ENCODE measurements at regions of chr16 and their contacts with region 1.

Region 1: GRCh38 chr16:31507929-31508705 is at the start of gene RUSF1:
- DNase-seq: peak; percentile 89
- H3K4me3 Mint-ChIP-seq: peak within 1 kb of the TSS; percentile 91
- H3K27ac Mint-ChIP-seq: peak within 1 kb of the TSS; percentile 91
- H3K4me1 Mint-ChIP-seq: peaks cover 45% of the 10 kb centered on the region
- H3K27me3 Mint-ChIP-seq: no peaks in the 10 kb centered on the region
- total RNA-seq, gene RUSF1: 36.8 to 37.9 TPM

Region 2: GRCh38 chr16:31441956-31442355 is 66.2 kb before region 1 on chr16:
- CTCF ChIA-PET with region 1: no interaction called
- POLR2A ChIA-PET with region 1: no interaction called
- DNase-seq: no peak
- H3K4me3 Mint-ChIP-seq: peak overlapping the region; percentile 73
- H3K27ac Mint-ChIP-seq: no peak overlapping the region
- H3K4me1 Mint-ChIP-seq: peaks cover 29% of the 10 kb centered on the region
- H3K27me3 Mint-ChIP-seq: no peaks in the 10 kb centered on the region

Region 3: DNA sequence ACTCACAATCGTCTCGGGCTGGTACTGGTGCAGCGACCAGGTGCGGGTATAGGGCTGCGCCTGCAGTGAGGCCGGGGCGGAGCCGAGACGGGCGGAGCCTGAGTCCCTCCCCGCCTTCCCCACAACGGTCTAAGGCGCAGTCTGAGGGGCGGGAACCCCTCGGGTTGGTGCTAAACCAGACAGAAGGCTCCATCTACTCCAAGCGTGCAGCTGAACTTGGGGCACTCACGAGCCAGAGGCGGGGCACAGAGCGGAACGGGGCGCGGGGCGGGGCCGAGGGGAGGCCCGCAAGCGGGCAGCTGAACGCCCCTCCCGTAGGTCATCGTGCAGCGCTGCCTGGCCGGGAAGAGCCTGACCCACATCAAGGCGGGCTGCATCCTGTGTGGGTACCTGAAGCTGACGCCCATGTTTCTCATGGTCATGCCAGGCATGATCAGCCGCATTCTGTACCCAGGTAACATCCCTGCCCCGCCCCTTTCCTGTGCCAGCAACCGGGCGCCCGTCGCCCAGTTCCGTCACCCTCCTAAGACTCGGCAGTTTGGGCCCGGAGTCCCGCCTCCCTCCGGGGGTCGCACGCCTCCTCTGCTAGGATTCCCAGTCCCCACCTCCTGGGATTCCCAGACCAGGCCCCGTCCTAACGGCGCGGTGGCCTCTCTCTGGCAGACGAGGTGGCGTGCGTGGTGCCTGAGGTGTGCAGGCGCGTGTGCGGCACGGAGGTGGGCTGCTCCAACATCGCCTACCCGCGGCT is 20.2 kb before region 1 on chr16:
- CTCF ChIA-PET with region 1: interaction called, 7 read pairs
- POLR2A ChIA-PET with region 1: interaction called, 11 read pairs
- DNase-seq: peak; percentile 66
- H3K4me3 Mint-ChIP-seq: peak overlapping the region; percentile 80
- H3K27ac Mint-ChIP-seq: no peak overlapping the region
- H3K4me1 Mint-ChIP-seq: peaks cover 12% of the 10 kb centered on the region
- H3K27me3 Mint-ChIP-seq: peaks cover 7% of the 10 kb centered on the region

Region 4: DNA sequence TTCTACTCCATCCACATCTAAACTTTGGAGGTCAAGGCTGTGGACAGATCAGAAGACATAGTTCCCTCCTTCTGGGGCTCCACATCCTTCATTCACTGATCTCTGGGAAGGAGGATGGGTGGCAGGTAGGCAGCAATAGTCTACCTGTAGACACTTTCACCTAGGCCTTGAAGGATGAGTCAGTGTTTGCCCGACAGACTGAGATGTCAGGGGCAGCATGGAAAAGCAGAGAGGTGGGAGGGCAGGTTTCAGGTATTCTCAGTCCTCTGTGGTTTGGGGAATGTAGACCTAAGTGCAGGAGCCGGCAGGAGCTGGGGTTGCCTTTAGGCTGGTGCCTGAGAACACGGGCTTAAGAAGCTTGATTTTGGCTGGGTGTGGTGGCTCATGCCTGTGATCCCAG is 193.6 kb after region 1 on chr16:
- CTCF ChIA-PET with region 1: no interaction called
- POLR2A ChIA-PET with region 1: no interaction called
- DNase-seq: no peak
- H3K4me3 Mint-ChIP-seq: peak overlapping the region; percentile 76
- H3K27ac Mint-ChIP-seq: peak overlapping the region; percentile 73
- H3K4me1 Mint-ChIP-seq: peaks cover 31% of the 10 kb centered on the region
- H3K27me3 Mint-ChIP-seq: peaks cover 2% of the 10 kb centered on the region

Region 5: GRCh38 chr16:31713071-31713944 is 205.2 kb after region 1 on chr16:
- CTCF ChIA-PET with region 1: interaction called, 5 read pairs
- POLR2A ChIA-PET with region 1: interaction called, 16 read pairs
- DNase-seq: peak; percentile 93
- H3K4me3 Mint-ChIP-seq: peak overlapping the region; percentile 97
- H3K27ac Mint-ChIP-seq: peak overlapping the region; percentile 96
- H3K4me1 Mint-ChIP-seq: peaks cover 36% of the 10 kb centered on the region
- H3K27me3 Mint-ChIP-seq: no peaks in the 10 kb centered on the region

Region 6: DNA sequence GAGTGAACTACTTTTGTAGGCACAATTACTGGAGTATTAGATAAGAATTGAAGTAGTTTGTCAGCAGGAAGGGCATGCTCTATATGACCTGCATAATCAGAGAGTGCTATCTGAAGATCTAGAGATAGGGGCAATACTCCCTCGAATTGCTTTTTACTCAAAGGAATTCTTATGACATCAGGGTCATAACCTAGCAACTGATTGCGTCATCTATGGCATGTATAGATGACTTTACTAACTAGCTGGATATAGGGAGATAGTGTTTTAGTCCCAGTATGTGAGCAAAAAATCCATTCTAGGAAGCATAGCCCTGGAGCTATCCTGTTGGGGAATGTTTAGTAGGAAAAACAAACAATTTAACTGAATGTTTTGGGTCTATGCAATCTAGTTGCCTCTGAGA is 256.0 kb after region 1 on chr16:
- CTCF ChIA-PET with region 1: no interaction called
- POLR2A ChIA-PET with region 1: no interaction called
- DNase-seq: no peak
- H3K4me3 Mint-ChIP-seq: no peak overlapping the region
- H3K27ac Mint-ChIP-seq: no peak overlapping the region
- H3K4me1 Mint-ChIP-seq: no peaks in the 10 kb centered on the region
- H3K27me3 Mint-ChIP-seq: no peaks in the 10 kb centered on the region

Region 7: GRCh38 chr16:31868691-31869167 is 360.6 kb after region 1 on chr16:
- CTCF ChIA-PET with region 1: interaction called, 12 read pairs
- POLR2A ChIA-PET with region 1: interaction called, 31 read pairs
- DNase-seq: peak; percentile 84
- H3K4me3 Mint-ChIP-seq: peak overlapping the region; percentile 61
- H3K27ac Mint-ChIP-seq: peak overlapping the region; percentile 81
- H3K4me1 Mint-ChIP-seq: peaks cover 60% of the 10 kb centered on the region
- H3K27me3 Mint-ChIP-seq: no peaks in the 10 kb centered on the region

Region 8: GRCh38 chr16:31873556-31874365 is 365.6 kb after region 1 on chr16 and contains the start of gene ZNF267:
- CTCF ChIA-PET with region 1: interaction called, 12 read pairs
- POLR2A ChIA-PET with region 1: interaction called, 31 read pairs
- DNase-seq: peak; percentile 95
- H3K4me3 Mint-ChIP-seq: peak within 1 kb of the TSS; percentile 87
- H3K27ac Mint-ChIP-seq: peak within 1 kb of the TSS; percentile 97
- H3K4me1 Mint-ChIP-seq: peaks cover 76% of the 10 kb centered on the region
- H3K27me3 Mint-ChIP-seq: no peaks in the 10 kb centered on the region
- total RNA-seq, gene ZNF267: 86.2 to 88.3 TPM